HCT116 (cell line): ENCODE measurements at regions of chr10 and their contacts with region 1.

Region 1: GRCh38 chr10:97676770-97677581 is 10.1 kb downstream of the AVPI1 start:
- DNase-seq: no peak
- ATAC-seq: peak; percentile 86
- H3K4me3 ChIP-seq: no peak overlapping the region
- H3K27ac ChIP-seq: 0 out of 2 replicates have a peak overlapping the region, but pooled peaks have one; percentile 20
- H3K4me1 ChIP-seq: peaks cover 0 to 15% of the 10 kb centered on the region in 2 experiments; a peak in 3 of 4 replicates
- H3K27me3 ChIP-seq: no peaks in the 10 kb centered on the region
- CTCF ChIP-seq: peak; percentile 71 to 88 (median 85)
- POLR2A ChIP-seq: no peak
- RAD21 ChIP-seq: peak; percentile 87

Region 2: GRCh38 chr10:97686962-97687784 is 10.2 kb after region 1 on chr10 and contains the start of gene AVPI1:
- CTCF ChIA-PET with region 1: interaction called, 25 read pairs
- POLR2A ChIA-PET with region 1: interaction called, 8 read pairs
- RAD21 ChIA-PET with region 1: no interaction called
- intact Hi-C with region 1: no loop called
- DNase-seq: peak; percentile 96
- ATAC-seq: peak; percentile 87
- H3K4me3 ChIP-seq: peak within 1 kb of the TSS; percentile 73 to 90
- H3K27ac ChIP-seq: peak within 1 kb of the TSS; percentile 74
- H3K4me1 ChIP-seq: peaks cover 47 to 67% of the 10 kb centered on the region in 2 experiments
- H3K27me3 ChIP-seq: no peaks in the 10 kb centered on the region
- CTCF ChIP-seq: no peak
- POLR2A ChIP-seq: peak; percentile 56
- RAD21 ChIP-seq: no peak
- total RNA-seq, gene AVPI1: 26.7 TPM

Region 3: GRCh38 chr10:97731346-97732051 is 54.5 kb after region 1 on chr10:
- CTCF ChIA-PET with region 1: interaction called, 7 read pairs
- POLR2A ChIA-PET with region 1: no interaction called
- RAD21 ChIA-PET with region 1: no interaction called
- intact Hi-C with region 1: loop called (anchors 1 kb)
- DNase-seq: no peak
- ATAC-seq: peak; percentile 87
- H3K4me3 ChIP-seq: no peak overlapping the region
- H3K27ac ChIP-seq: no peak overlapping the region
- H3K4me1 ChIP-seq: peaks cover 0 to 8% of the 10 kb centered on the region in 2 experiments; a peak in 2 of 4 replicates
- H3K27me3 ChIP-seq: no peaks in the 10 kb centered on the region
- CTCF ChIP-seq: peak; percentile 85 to 95 (median 86)
- POLR2A ChIP-seq: no peak
- RAD21 ChIP-seq: peak; percentile 98